RWPE1 (cell line): ENCODE measurements at regions of chr22 and their contacts with region 1.

Region 1: GRCh38 chr22:32796865-32797573 is 4.5 kb upstream of the TIMP3 start:
- DNase-seq: peak; percentile 43
- H3K27ac ChIP-seq: peak overlapping the region; percentile 5; the same call in 1 of the 2 replicates
- CTCF ChIP-seq: peak; percentile 73

Region 2: DNA sequence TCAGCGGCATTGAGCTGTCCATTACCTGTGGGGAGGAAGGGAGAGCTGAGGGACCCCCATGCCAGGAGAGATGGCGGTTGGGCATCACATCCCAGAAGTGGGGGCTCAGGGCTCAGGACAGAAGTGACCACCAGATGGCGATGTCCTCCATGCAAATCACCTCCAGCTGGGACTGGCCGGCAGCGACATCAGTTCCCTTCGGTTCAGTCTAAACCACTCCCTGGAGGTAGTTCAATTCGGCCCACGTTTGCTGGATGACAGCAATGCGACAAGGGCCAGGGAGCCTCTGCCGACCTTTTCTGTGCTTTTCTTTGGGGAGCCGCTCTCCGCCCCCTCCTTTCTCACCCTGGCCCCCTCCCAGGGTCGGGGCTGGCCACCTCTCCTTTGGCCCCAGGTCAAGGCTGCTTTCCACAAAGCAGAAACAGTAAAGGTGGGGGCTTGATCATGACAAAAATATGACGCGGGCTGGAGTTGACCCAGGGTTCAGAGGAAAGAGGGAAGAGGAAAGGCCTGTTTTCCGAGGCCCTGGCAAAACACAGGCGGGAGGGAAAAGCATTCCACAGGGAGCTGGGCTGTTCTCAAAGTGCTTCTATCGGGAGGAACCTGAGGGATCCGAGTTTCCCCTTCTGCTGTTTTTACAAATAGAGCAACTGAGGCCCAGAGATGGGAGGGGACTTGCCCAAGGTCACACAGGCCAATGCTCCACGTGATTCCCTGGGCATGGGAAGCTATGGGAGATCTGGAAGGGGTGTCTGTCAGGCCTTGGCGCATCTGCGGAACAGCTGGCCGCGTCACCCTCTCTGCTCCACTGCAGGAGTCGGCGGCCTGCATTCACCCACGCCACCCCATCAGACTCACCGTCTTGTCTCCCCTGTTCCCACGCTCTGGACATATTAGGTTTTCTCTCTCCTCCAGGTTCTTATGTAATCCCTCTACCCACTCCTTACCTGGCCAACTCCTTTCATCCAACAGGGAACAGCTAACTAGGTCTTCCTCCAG is 267.7 kb before region 1 on chr22:
- CTCF ChIA-PET with region 1: interaction called, 15 read pairs
- POLR2A ChIA-PET with region 1: no interaction called
- DNase-seq: peak; percentile 76
- H3K27ac ChIP-seq: peak overlapping the region; percentile 8; the same call in 1 of the 2 replicates
- CTCF ChIP-seq: peak; percentile 86